ENCODE measurements at regions of chr18 and their contacts with region 1.

Region 1: DNA sequence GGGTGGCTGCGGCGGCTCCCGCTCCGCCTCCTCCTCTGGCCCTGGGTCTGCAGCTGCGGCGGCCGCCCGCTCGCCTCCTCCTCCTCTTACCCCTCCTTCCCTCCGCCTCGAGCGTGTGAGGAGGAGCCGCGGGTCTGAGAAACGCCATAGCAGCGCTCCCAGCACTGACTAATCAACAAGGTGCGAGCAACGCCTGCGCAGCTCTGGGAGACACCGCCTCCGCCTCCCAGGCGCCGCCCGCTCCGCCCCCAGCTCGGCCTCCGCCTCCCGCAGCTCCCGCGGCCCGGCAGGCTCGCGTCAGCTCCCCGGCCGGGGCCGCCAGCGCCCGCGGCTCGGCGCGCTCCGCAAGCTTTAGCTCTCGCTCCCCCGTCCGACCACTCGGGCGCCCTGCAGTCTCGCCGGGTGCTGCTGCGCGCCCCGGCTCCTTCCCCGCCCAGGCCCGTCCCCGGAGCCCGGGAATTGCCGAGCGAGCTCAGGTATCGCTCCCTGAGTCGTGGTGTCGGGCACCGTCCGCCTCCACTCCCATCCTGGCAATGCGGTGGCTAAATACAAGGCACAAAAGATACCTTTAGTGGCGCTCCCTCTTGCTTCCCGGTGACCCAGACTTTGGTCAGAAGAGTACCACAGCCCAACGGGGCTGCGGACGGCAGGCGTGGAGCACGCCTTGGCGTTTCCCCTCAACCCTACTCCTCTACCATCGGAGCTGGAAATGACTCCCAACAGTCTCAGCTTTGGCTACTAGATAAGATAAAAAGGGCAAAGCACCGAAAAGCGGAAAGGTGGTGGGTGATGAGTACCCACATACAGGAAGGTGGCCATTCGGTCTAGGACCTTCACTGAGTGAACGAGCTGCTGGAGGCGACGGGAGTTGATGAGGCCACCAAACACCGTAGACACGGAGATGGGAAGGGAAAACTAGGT is at the start of gene GAREM1:
- DNase-seq: peak; percentile 99
- H3K4me3 Mint-ChIP-seq: peak within 1 kb of the TSS; percentile 77
- H3K27ac Mint-ChIP-seq: peak within 1 kb of the TSS; percentile 35
- H3K4me1 Mint-ChIP-seq: peaks cover 22% of the 10 kb centered on the region
- H3K27me3 Mint-ChIP-seq: no peaks in the 10 kb centered on the region
- CTCF ChIP-seq: peak; percentile 81
- total RNA-seq, gene GAREM1: 21.4 and 24.0 TPM in 2 replicates

Region 2: DNA sequence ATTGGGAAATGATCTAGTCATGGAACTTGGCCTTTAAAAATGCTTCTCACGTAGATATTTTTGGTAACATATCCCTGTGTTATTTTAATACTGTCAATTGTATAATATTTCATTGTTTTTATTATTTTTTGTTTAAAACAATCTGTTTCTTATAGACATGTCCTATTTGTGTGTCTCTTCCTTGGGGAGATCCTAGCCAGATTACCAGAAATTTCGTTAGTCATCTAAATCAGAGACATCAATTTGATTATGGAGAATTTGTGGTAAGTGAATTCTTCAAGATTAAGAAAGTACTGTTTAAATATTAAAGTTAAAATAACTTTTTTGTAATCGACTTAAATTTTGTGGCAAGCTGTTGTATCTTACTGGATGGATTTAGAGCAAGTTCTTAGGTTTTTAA is 344.4 kb before region 1 on chr18:
- CTCF ChIA-PET with region 1: no interaction called
- POLR2A ChIA-PET with region 1: no interaction called
- intact Hi-C with region 1: no loop called
- DNase-seq: no peak
- H3K4me3 Mint-ChIP-seq: no peak overlapping the region
- H3K27ac Mint-ChIP-seq: no peak overlapping the region
- H3K4me1 Mint-ChIP-seq: no peaks in the 10 kb centered on the region
- H3K27me3 Mint-ChIP-seq: no peaks in the 10 kb centered on the region
- CTCF ChIP-seq: no peak

Region 3: DNA sequence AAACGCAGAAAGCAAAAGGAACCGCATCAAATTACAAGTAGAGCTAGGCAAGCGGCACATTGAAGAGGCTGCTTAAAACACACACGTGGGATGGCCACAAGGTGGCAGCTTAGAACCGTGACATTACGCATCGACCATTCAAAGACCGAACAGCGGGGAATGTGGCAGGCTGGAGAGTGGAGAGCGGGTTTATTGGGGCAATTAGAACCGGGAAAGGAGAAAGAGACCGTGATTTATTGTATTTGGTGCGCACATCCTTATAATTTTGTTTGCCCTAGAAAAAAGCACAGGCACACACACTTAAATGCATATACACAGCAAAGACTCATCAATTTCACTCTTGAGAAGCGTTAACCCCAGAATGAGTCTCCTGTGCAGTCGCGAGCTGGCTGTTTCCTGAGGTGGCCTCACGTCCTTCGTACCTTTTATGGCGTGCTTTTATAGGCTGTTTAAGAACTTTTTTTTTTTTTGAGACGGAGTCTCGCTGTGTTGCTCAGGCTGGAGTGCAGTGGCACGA is 312.8 kb before region 1 on chr18:
- CTCF ChIA-PET with region 1: interaction called, 125 read pairs
- POLR2A ChIA-PET with region 1: interaction called, 10 read pairs
- intact Hi-C with region 1: loop called (anchors 1 kb)
- DNase-seq: peak; percentile 92
- H3K4me3 Mint-ChIP-seq: no peak overlapping the region
- H3K27ac Mint-ChIP-seq: no peak overlapping the region
- H3K4me1 Mint-ChIP-seq: peaks cover 4% of the 10 kb centered on the region
- H3K27me3 Mint-ChIP-seq: no peaks in the 10 kb centered on the region
- CTCF ChIP-seq: peak; percentile 76

Region 4: DNA sequence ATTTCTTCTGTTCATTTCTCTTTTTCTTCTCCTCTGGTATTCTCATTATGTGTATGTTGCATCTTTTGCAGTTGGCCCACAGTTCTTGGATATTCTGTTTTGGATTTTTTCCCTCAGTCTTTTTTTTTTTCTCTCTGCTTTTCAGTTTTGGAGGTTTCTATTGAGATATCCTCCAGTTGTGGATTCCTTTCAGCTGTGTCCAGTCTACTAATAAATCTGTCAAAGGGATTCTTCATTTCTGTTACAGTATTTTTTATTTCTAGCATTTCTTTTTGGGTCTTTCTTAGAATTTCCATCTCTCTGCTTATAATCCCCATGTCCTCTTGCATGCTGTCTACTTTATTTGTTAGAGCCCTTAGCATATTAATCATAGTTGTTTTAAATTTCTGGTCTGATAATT is 287.5 kb before region 1 on chr18:
- CTCF ChIA-PET with region 1: no interaction called
- POLR2A ChIA-PET with region 1: no interaction called
- intact Hi-C with region 1: no loop called
- DNase-seq: no peak
- H3K4me3 Mint-ChIP-seq: no peak overlapping the region
- H3K27ac Mint-ChIP-seq: no peak overlapping the region
- H3K4me1 Mint-ChIP-seq: no peaks in the 10 kb centered on the region
- H3K27me3 Mint-ChIP-seq: no peaks in the 10 kb centered on the region
- CTCF ChIP-seq: no peak

Region 5: DNA sequence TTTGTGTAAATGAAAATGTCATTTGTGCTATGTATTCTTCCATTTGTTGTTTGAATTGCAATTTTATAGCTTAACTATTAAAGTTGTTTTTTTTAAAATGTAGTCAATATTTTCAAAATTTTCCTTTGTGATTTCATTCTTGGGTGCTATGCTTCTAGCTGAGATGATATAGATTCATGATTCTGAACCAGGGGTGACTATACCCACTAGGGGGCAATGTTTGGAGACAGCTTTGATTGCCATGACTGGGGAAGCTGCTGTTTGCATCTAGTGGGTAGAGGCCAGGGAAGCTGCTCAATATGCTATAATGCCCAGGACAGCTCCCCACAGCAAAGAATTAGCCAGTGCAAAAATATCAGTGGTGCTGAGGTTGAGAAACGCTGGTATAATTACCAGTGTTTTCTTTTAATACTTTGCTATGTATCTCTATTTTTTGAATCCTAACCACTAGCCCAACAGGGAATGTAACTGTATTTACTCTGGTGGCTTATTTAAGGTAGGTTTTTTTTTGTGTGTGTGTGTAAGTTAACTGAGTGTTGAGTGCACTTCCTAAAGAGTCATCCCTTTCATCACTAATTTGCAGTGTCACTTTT is 181.4 kb before region 1 on chr18:
- CTCF ChIA-PET with region 1: interaction called, 86 read pairs
- POLR2A ChIA-PET with region 1: interaction called, 47 read pairs
- intact Hi-C with region 1: loop called (anchors 1 kb)
- DNase-seq: peak; percentile 82
- H3K4me3 Mint-ChIP-seq: no peak overlapping the region
- H3K27ac Mint-ChIP-seq: no peak overlapping the region
- H3K4me1 Mint-ChIP-seq: peaks cover 26% of the 10 kb centered on the region
- H3K27me3 Mint-ChIP-seq: no peaks in the 10 kb centered on the region
- CTCF ChIP-seq: peak; percentile 59

Region 6: GRCh38 chr18:32324181-32324580 is 146.8 kb before region 1 on chr18:
- CTCF ChIA-PET with region 1: interaction called, 15 read pairs
- POLR2A ChIA-PET with region 1: interaction called, 3 read pairs
- intact Hi-C with region 1: loop called (anchors 1 kb)
- DNase-seq: no peak
- H3K4me3 Mint-ChIP-seq: no peak overlapping the region
- H3K27ac Mint-ChIP-seq: peak overlapping the region; percentile 10
- H3K4me1 Mint-ChIP-seq: peaks cover 42% of the 10 kb centered on the region
- H3K27me3 Mint-ChIP-seq: no peaks in the 10 kb centered on the region
- CTCF ChIP-seq: no peak

Region 7: GRCh38 chr18:32373995-32374394 is 97.0 kb before region 1 on chr18:
- CTCF ChIA-PET with region 1: interaction called, 74 read pairs
- POLR2A ChIA-PET with region 1: interaction called, 171 read pairs
- intact Hi-C with region 1: loop called (anchors 1 kb)
- DNase-seq: peak; percentile 73
- H3K4me3 Mint-ChIP-seq: no peak overlapping the region
- H3K27ac Mint-ChIP-seq: peak overlapping the region; percentile 98
- H3K4me1 Mint-ChIP-seq: peaks cover 45% of the 10 kb centered on the region
- H3K27me3 Mint-ChIP-seq: no peaks in the 10 kb centered on the region
- CTCF ChIP-seq: no peak

Region 8: DNA sequence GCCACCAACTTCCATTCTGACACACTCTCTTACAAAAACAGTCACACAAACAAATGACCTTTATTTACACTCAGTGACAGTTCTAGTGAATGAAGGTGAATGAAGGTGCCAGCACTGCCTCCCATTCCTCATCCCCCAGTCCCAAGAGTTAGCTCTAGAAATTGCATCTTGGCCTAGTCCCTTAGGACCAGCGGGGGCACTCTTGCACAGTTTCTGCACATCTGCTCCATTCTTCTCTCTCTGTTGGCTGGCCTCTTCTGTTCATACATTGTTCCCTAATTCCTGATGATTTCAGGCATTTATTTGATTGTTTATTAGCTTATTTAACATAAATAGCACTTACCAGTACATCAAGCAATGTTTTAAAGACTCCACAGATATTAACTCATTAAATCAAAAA is 31.2 kb before region 1 on chr18:
- CTCF ChIA-PET with region 1: interaction called, 26 read pairs
- POLR2A ChIA-PET with region 1: interaction called, 12 read pairs
- intact Hi-C with region 1: no loop called
- DNase-seq: peak; percentile 34
- H3K4me3 Mint-ChIP-seq: no peak overlapping the region
- H3K27ac Mint-ChIP-seq: no peak overlapping the region
- H3K4me1 Mint-ChIP-seq: peaks cover 35% of the 10 kb centered on the region
- H3K27me3 Mint-ChIP-seq: no peaks in the 10 kb centered on the region
- CTCF ChIP-seq: peak; percentile 12